ENCODE measurements at regions of chr1 and their contacts with region 1.

Region 1: DNA sequence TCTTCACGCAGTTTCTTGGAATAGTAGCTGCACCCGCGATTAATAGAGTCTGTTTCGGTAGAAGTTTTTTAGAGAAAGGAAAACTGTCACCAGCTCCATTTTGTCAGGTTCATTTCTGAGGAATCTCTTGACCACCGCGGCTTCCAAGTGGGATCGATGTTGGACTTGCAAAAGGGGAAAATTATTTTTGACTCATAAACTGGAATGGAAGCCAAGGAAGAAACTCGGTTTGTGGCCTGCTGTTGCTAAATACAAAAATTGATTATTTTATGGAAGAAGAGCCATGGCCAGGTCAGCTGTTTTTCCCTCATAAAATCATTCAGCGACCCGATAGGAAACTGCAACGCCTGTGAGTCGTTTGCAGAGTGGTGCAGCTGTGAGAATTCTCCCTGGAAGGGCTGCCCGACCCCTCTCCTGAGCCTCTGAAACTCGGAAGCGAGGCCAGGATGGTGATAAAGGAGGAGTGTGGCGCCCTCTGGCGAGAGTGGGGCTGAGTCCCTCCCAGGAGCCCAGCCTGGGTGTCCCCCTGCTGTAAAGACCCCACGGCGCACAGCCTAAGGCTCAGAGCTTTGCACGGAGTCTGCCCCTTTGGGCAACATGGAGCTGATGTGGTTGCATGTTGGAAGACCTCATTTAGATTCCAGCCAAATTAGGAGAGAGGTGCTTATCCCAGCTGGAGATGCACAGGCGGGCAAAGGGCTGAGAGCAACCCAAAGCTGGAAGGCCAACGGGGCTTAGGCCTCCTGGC is 83.6 kb upstream of the SLC25A33 start:
- DNase-seq: peak; percentile 79
- H3K4me3 ChIP-seq: no peak overlapping the region
- H3K27ac ChIP-seq: no peak overlapping the region
- H3K4me1 ChIP-seq: no peaks in the 10 kb centered on the region
- H3K27me3 ChIP-seq: peaks cover 0 to 4% of the 10 kb centered on the region in 2 experiments
- CTCF ChIP-seq: peak; percentile 85 to 91
- POLR2A ChIP-seq: no peak

Region 2: DNA sequence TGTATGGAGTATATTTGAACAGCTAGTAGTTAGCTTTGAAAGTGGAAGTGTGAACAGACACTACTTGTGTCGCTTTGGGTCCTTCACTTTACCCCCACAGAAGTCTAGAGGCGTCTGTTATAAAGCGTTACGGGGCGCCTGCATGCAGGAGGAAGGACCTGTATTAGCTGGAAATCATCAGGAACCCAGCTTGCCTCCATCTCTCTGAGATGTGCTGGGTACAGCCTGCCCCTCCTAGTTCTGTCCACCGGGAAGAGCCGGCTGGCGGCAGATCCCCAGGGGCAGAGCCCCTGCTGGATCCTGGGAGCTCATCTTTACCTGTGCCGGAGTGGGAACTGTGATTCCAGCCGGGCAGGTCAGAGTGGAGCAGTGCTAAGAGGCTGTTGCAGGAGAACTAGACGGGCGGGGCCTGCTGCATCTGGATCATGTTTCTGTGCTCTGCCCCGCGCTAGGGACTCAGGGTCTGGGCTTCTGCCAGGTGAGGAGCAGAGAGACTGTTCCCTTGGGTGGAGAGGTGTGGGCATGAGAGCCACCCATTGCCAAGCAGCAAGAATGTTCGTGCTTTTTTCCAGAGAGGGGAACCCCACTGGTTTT is 185.3 kb before region 1 on chr1:
- CTCF ChIA-PET with region 1: interaction called, 36 read pairs
- POLR2A ChIA-PET with region 1: no interaction called
- dilution Hi-C with region 1: no loop called
- intact Hi-C with region 1: loop called (anchors 1 kb)
- DNase-seq: no peak
- H3K4me3 ChIP-seq: no peak overlapping the region
- H3K27ac ChIP-seq: no peak overlapping the region
- H3K4me1 ChIP-seq: peaks cover 4% of the 10 kb centered on the region
- H3K27me3 ChIP-seq: no peaks in the 10 kb centered on the region
- CTCF ChIP-seq: no peak
- POLR2A ChIP-seq: no peak

Region 3: DNA sequence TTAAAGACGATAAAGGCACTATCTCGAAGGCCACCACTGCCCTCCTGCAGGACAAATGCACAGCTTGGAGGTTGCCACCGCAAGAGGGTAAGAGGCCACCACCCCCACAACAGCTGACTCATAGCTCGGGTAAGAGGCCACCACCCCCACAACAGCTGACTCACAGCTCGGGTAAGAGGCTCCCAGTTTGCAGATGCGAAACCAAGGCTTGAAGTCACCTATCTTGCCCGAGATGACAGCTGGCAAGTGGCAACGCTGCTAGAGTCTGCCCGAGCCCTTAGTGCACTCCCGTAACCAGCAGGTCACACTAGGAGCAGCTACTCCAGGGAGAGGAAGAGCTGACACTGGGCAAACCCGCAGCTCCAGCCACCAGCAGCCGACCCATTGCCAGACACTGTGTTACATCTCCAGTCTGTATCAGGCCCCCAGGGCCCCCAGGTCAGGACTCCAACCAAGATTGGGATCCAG is 180.1 kb before region 1 on chr1:
- CTCF ChIA-PET with region 1: interaction called, 10 read pairs
- POLR2A ChIA-PET with region 1: no interaction called
- dilution Hi-C with region 1: no loop called
- intact Hi-C with region 1: no loop called
- DNase-seq: peak; percentile 63
- H3K4me3 ChIP-seq: no peak overlapping the region
- H3K27ac ChIP-seq: no peak overlapping the region
- H3K4me1 ChIP-seq: peaks cover 13% of the 10 kb centered on the region
- H3K27me3 ChIP-seq: no peaks in the 10 kb centered on the region
- CTCF ChIP-seq: no peak
- POLR2A ChIP-seq: no peak

Region 4: GRCh38 chr1:9317591-9318417 is 137.9 kb before region 1 on chr1:
- CTCF ChIA-PET with region 1: interaction called, 10 read pairs
- POLR2A ChIA-PET with region 1: no interaction called
- dilution Hi-C with region 1: no loop called
- intact Hi-C with region 1: no loop called
- DNase-seq: peak; percentile 83
- H3K4me3 ChIP-seq: no peak overlapping the region
- H3K27ac ChIP-seq: peak overlapping the region; percentile 79
- H3K4me1 ChIP-seq: peaks cover 18% of the 10 kb centered on the region
- H3K27me3 ChIP-seq: no peaks in the 10 kb centered on the region
- CTCF ChIP-seq: no peak
- POLR2A ChIP-seq: no peak

Region 5: DNA sequence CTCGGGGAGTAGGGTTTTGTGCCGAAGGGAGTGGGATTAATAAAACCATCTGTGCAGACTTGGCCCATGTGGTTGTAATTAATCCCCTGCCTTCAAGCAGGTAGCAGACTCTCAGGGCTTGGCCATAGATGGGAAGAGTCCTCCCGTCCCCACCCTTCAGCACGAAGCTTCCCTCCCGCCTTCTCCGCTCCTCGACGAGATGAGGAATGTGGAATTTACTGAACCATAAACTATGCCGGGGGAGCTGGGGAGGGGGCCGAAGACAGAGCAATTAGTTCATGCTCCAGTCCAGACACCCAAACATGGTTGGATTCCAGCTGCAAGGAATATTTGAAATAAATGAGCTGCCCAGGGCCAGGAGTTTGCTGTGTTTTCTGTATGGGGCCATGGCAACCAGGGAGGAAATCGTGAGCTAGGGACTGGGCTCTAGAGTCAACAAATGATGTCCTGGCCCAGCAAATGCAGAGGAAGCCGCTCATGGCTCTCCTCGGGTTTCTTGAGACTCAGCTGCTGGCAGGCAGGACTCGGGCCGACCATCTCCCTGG is 84.2 kb before region 1 on chr1:
- CTCF ChIA-PET with region 1: interaction called, 16 read pairs
- POLR2A ChIA-PET with region 1: no interaction called
- dilution Hi-C with region 1: no loop called
- intact Hi-C with region 1: loop called (anchors 2 kb)
- DNase-seq: peak; percentile 95
- H3K4me3 ChIP-seq: no peak overlapping the region
- H3K27ac ChIP-seq: peak overlapping the region; percentile 48
- H3K4me1 ChIP-seq: peaks cover 31% of the 10 kb centered on the region
- H3K27me3 ChIP-seq: no peaks in the 10 kb centered on the region
- CTCF ChIP-seq: no peak
- POLR2A ChIP-seq: no peak

Region 6: DNA sequence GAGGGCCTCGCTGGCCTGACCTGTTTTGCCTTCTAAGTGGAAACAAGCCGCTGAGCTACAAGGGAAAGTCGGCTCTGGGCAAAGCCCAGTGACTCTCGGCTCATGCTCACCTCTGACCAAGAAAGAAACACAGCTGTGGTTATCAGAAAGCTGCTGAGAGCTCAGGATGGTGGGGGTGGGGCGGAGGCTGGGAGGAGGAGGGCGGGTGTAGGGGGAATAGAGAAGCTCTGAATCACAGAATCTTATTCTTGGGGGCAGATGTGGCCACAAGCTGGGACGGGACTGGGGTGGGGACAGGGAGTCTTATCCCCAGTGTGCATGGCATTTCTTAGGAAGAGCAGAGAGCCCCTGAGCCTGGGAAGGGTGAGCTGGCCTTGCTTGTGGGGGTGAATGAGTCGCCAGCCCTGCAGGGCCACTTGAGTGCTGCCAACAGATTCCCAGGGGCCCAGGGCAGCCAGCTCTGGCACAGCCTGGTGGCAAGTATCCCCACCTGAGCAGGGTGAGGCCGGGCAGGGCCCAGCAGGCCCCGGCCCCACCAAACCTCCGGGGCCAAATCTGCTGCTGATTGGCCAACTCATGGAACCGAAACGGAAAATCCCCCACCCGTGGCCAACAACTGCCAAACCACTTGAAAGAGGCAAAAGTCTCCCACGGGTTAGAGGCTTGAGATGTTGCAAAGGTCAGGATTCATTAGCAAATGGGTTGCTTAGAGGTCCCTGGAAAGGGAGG is 42.3 kb before region 1 on chr1:
- CTCF ChIA-PET with region 1: interaction called, 14 read pairs
- POLR2A ChIA-PET with region 1: no interaction called
- dilution Hi-C with region 1: no loop called
- intact Hi-C with region 1: no loop called
- DNase-seq: peak; percentile 92
- H3K4me3 ChIP-seq: no peak overlapping the region
- H3K27ac ChIP-seq: peak overlapping the region; percentile 80
- H3K4me1 ChIP-seq: peaks cover 20% of the 10 kb centered on the region
- H3K27me3 ChIP-seq: no peaks in the 10 kb centered on the region
- CTCF ChIP-seq: no peak
- POLR2A ChIP-seq: no peak

Region 7: DNA sequence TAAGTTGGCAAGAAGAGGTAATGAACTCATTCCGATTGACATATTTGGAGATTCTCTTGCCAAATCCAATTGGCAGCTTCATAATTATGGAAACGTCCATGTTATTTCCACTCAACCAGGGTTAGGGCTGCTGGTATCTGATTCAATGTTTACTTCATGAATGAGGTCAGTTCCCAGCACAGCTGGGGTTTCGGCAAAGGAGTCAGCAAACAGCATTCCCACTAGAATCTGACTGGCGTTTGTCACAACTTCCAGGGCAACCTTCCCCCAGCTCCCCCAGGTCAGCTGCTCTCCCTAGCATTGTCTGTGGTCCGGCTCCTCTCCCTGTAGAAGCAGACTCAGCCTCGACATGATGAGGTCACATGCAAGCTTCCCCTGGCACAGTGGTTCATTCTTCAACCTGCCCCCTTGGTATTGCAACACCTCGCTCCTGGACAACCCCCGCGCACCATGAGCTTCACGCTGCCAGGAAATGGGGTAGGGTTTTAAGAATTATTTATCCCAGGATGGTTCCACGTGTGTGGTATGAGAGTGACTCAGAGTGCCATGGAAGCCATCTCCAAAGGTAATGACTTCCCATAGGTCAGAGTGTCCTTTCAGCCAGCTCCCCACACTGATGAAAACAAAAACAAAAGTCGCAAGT is 17.1 kb before region 1 on chr1:
- CTCF ChIA-PET with region 1: interaction called, 12 read pairs
- POLR2A ChIA-PET with region 1: interaction called, 3 read pairs
- dilution Hi-C with region 1: no loop called
- intact Hi-C with region 1: no loop called
- DNase-seq: peak; percentile 95
- H3K4me3 ChIP-seq: no peak overlapping the region
- H3K27ac ChIP-seq: peak overlapping the region; percentile 50
- H3K4me1 ChIP-seq: peaks cover 49% of the 10 kb centered on the region
- H3K27me3 ChIP-seq: no peaks in the 10 kb centered on the region
- CTCF ChIP-seq: no peak
- POLR2A ChIP-seq: no peak

Region 8: DNA sequence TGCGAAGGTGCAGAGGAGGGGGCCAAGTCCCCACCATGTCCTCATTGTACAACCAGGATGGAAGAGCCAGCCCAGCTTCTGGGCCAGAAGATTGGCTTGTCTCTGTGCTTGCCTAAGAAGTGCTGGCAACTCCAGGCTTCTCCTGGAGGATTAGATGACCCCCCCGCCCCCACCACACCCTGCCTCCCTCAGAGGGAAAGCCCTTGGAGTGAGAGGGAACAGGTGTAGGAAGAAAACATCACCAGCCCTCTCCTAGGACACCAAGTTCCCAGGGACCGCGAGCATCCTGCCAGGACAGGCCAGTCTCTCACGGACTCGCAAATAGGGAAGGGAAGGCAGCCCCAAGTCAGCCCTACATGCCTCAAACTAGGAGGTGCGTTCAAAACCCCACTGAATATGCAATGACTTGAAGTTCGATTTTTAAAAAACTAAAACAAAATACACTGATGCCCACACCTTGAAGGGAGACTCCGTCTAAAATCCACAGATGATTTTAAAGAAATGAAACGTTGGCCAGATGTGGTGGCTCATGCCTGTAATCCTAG is 62.9 kb after region 1 on chr1:
- CTCF ChIA-PET with region 1: no interaction called
- POLR2A ChIA-PET with region 1: no interaction called
- dilution Hi-C with region 1: no loop called
- intact Hi-C with region 1: no loop called
- DNase-seq: no peak
- H3K4me3 ChIP-seq: no peak overlapping the region
- H3K27ac ChIP-seq: no peak overlapping the region
- H3K4me1 ChIP-seq: no peaks in the 10 kb centered on the region
- H3K27me3 ChIP-seq: peaks cover 0 to 1% of the 10 kb centered on the region in 2 experiments
- CTCF ChIP-seq: no peak
- POLR2A ChIP-seq: no peak

Measured in endothelial cell of umbilical vein (primary cell).